Naive thymus-derived CD4-positive, alpha-beta T cell (primary cell): ENCODE measurements at regions of chr6 and their contacts with region 1.

Region 1: GRCh38 chr6:45586216-45587171 is 208.8 kb upstream of the SUPT3H start:
- DNase-seq: peak; percentile 11 to 93 (median 86)
- ATAC-seq: peak; percentile 93
- H3K4me3 ChIP-seq: peak overlapping the region; percentile 4
- H3K4me3 Mint-ChIP-seq: peak overlapping the region; percentile 76 to 89 (median 81)
- H3K27ac ChIP-seq: peak overlapping the region; percentile 9
- H3K27ac Mint-ChIP-seq: peak overlapping the region; percentile 59 to 97 (median 89)
- H3K4me1 ChIP-seq: peaks cover 48 to 67% of the 10 kb centered on the region in 2 donors
- H3K4me1 Mint-ChIP-seq: peaks cover 40 to 70% (median 69%) of the 10 kb centered on the region in 7 donors
- H3K27me3 ChIP-seq: no peaks in the 10 kb centered on the region
- H3K27me3 Mint-ChIP-seq: no peaks in the 10 kb centered on the region

Region 2: DNA sequence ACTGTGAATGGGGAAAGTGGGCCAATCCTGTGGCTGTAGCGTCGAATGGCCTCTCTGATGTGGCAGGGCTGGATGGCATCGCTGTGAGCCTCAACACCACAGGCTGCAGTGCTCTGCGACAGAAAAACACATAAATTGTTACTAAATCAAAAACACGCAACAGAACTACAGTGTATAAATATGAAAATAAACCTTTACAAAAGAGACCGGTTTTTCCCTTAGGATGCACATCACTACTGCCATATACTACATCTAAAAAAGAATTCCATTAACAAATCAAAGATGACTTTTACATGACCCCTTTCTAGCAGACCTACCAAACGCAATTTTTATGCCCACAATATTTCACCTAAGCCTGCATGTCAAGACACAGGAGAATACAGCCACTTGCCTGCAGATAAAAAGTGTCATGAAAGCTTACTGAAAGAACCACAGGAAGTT is 653.8 kb before region 1 on chr6:
- CTCF ChIA-PET with region 1: no interaction called
- POLR2A ChIA-PET with region 1: no interaction called
- intact Hi-C with region 1: loop called in 1 of 2 experiments (anchors 10 kb)
- DNase-seq: peak in 7 of 9 donors; percentile 46 to 66 (median 58)
- ATAC-seq: peak; percentile 91
- H3K4me3 ChIP-seq: peak overlapping the region; percentile 37
- H3K4me3 Mint-ChIP-seq: peak overlapping the region; percentile 78 to 98 (median 88)
- H3K27ac ChIP-seq: peak overlapping the region; percentile 71
- H3K27ac Mint-ChIP-seq: peak overlapping the region; percentile 92 to 99 (median 96)
- H3K4me1 ChIP-seq: peaks cover 17 to 42% of the 10 kb centered on the region in 2 donors
- H3K4me1 Mint-ChIP-seq: peaks cover 26 to 67% (median 60%) of the 10 kb centered on the region in 7 donors
- H3K27me3 ChIP-seq: no peaks in the 10 kb centered on the region
- H3K27me3 Mint-ChIP-seq: no peaks in the 10 kb centered on the region

Region 3: DNA sequence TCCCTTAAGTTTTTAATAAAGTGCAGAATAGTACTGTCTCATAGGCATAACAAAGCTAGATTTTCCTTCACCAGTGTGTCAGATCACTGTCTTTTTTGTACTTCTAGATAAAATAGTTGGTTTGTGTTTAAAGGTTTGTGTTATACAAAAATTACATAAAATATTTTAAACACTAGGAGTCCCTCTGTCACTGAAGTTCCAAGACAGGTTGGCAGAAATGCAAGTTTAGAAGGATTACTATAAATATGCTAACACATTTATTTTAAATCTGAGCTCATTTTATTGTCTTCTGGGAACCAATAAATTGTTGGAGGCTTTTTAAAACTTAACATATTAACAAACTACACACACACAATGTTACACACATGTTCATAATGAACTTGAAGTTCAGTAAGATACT is 289.2 kb before region 1 on chr6:
- CTCF ChIA-PET with region 1: no interaction called
- POLR2A ChIA-PET with region 1: no interaction called
- intact Hi-C with region 1: loop called in 1 of 2 experiments (anchors 5 kb)
- DNase-seq: no peak
- ATAC-seq: no peak
- H3K4me3 ChIP-seq: no peak overlapping the region
- H3K4me3 Mint-ChIP-seq: no peak overlapping the region
- H3K27ac ChIP-seq: no peak overlapping the region
- H3K27ac Mint-ChIP-seq: peak overlapping the region in 6 of 9 donors; percentile 4 to 56 (median 19)
- H3K4me1 ChIP-seq: peaks cover 0 to 14% of the 10 kb centered on the region in 2 donors
- H3K4me1 Mint-ChIP-seq: peaks cover 21 to 74% (median 43%) of the 10 kb centered on the region in 7 donors
- H3K27me3 ChIP-seq: no peaks in the 10 kb centered on the region
- H3K27me3 Mint-ChIP-seq: no peaks in the 10 kb centered on the region

Region 4: GRCh38 chr6:45486736-45487135 is 99.8 kb before region 1 on chr6:
- CTCF ChIA-PET with region 1: no interaction called
- POLR2A ChIA-PET with region 1: interaction called, 3 read pairs
- intact Hi-C with region 1: loop called in 1 of 2 experiments (anchors 2 kb)
- DNase-seq: no peak
- ATAC-seq: peak; percentile 45
- H3K4me3 ChIP-seq: no peak overlapping the region
- H3K4me3 Mint-ChIP-seq: no peak overlapping the region
- H3K27ac ChIP-seq: no peak overlapping the region
- H3K27ac Mint-ChIP-seq: no peak overlapping the region
- H3K4me1 ChIP-seq: peaks cover 17 to 20% of the 10 kb centered on the region in 2 donors
- H3K4me1 Mint-ChIP-seq: peaks cover 21 to 38% (median 31%) of the 10 kb centered on the region in 7 donors
- H3K27me3 ChIP-seq: no peaks in the 10 kb centered on the region
- H3K27me3 Mint-ChIP-seq: peaks cover 0 to 4% (median 0%) of the 10 kb centered on the region in 5 donors

Region 5: GRCh38 chr6:45597424-45597823 is 10.9 kb after region 1 on chr6:
- CTCF ChIA-PET with region 1: interaction called, 3 read pairs
- POLR2A ChIA-PET with region 1: interaction called, 3 read pairs
- intact Hi-C with region 1: loop called in 1 of 2 experiments (anchors 1 kb)
- DNase-seq: no peak
- ATAC-seq: no peak
- H3K4me3 ChIP-seq: no peak overlapping the region
- H3K4me3 Mint-ChIP-seq: no peak overlapping the region
- H3K27ac ChIP-seq: no peak overlapping the region
- H3K27ac Mint-ChIP-seq: no peak overlapping the region
- H3K4me1 ChIP-seq: no peaks in the 10 kb centered on the region
- H3K4me1 Mint-ChIP-seq: peaks cover 3 to 29% (median 23%) of the 10 kb centered on the region in 7 donors
- H3K27me3 ChIP-seq: no peaks in the 10 kb centered on the region
- H3K27me3 Mint-ChIP-seq: peaks cover 0 to 3% (median 0%) of the 10 kb centered on the region in 5 donors

Region 6: DNA sequence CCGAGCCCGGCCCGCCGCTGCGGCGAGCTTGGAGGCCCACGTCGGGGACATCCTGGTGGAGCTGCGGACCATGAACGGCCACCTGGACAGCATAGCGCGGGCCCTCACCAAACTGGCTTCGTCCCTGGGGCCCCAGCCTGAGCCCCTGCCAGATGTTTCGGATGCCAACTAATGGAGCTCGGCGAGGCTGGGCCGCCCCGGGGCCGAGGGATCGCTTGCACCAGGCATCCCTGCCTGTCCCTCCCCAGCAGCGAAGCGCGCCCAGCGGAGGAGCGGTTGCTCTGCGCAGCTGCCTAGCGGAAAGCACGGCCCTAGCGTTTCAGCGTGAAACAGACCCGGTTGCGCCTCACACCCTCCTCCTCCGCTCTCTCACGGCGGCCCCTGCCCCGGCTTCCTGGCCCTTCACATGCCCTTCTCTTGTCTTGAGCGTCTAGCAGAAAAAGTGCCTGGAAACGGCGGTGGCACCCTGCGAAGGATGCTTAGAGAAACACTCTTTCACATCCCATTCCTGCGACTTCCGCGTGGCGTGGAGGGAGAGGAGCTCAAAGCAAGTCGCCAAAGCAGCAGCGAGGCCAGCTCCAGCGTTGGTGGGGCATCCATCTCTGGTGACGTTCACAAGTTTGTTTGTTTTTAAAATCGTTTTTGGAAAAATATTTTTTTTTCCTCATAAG is 77.2 kb after region 1 on chr6:
- CTCF ChIA-PET with region 1: interaction called, 3 read pairs
- POLR2A ChIA-PET with region 1: interaction called, 3 read pairs
- intact Hi-C with region 1: loop called in 1 of 2 experiments (anchors 5 kb)
- DNase-seq: peak in 8 of 9 donors; percentile 14 to 55 (median 47)
- ATAC-seq: peak; percentile 72
- H3K4me3 ChIP-seq: peak overlapping the region; percentile 46
- H3K4me3 Mint-ChIP-seq: peak overlapping the region; percentile 34 to 84 (median 71)
- H3K27ac ChIP-seq: no peak overlapping the region
- H3K27ac Mint-ChIP-seq: peak overlapping the region in 1 of 9 donors; percentile 32
- H3K4me1 ChIP-seq: peaks cover 0 to 12% of the 10 kb centered on the region in 2 donors
- H3K4me1 Mint-ChIP-seq: peaks cover 7 to 57% (median 43%) of the 10 kb centered on the region in 7 donors
- H3K27me3 ChIP-seq: no peaks in the 10 kb centered on the region
- H3K27me3 Mint-ChIP-seq: peaks cover 0 to 31% (median 17%) of the 10 kb centered on the region in 5 donors